CD8-positive, alpha-beta memory T cell (primary cell): ENCODE measurements at regions of chr11 and their contacts with region 1.

Region 1: DNA sequence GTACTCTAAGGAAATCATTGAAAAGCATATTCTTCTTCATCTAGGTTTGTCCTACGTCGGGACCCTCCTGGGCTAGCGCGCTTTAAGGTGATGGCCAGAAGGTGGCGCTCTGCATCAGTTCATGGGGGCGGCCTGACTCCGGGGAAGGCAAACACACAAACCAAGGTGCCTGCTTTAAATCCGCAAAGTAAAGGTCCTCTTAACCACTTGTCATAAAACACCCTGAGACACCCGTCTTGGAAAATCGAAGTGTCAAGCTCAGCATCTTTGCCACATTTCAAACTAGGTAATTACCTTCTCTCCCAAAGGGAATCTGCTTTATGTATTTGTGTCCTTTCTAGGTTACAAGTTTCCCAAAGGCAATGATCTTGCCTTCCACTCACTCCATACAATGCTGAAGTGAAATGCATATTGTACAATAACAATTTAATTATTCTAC is 33.9 kb downstream of the LMO2 start:
- DNase-seq: peak; percentile 43 to 72 (median 45)
- H3K4me3 ChIP-seq: no peak overlapping the region
- H3K4me3 Mint-ChIP-seq: no peak overlapping the region
- H3K27ac ChIP-seq: no peak overlapping the region
- H3K27ac Mint-ChIP-seq: peak overlapping the region in 1 of 8 donors; percentile 45
- H3K4me1 ChIP-seq: no peaks in the 10 kb centered on the region
- H3K4me1 Mint-ChIP-seq: no peaks in the 10 kb centered on the region
- H3K27me3 ChIP-seq: peaks cover 4% of the 10 kb centered on the region
- H3K27me3 Mint-ChIP-seq: peaks cover 20 to 68% of the 10 kb centered on the region in 2 donors

Region 2: DNA sequence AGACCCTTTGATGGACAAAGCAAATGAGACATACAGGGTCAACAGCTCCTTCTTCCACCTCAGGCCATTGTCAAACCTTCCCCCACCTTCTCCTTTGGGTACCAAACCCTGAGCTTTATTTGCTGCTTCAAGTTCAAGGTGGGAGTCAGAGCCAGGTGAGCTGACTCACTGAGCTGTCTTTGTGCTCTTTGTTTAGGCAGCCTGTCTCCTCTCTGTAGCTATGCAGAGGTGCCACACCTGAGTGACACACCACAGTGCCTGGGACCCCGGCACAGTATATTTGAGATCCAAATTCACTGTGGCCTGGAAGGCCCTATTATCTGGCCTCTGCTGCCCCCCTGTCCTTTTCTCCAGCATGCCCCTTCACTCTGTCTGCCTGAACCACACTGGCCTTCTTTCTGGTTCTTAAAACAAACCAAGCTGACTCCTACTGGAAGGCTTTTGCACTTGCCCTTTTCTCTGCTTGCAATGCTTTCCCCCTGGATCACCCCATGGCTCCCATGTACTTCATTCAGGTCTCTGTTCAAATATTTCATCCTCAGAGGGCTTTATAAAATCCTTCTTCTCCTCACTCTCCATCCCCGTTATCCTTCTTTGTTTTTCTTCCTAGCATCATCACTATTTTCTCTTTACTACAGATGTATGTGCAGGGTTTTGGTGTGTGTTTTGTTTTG is 17.8 kb after region 1 on chr11:
- CTCF ChIA-PET with region 1: no interaction called
- POLR2A ChIA-PET with region 1: no interaction called
- DNase-seq: no peak
- H3K4me3 ChIP-seq: no peak overlapping the region
- H3K4me3 Mint-ChIP-seq: no peak overlapping the region
- H3K27ac ChIP-seq: no peak overlapping the region
- H3K27ac Mint-ChIP-seq: peak overlapping the region in 1 of 8 donors; percentile 45
- H3K4me1 ChIP-seq: no peaks in the 10 kb centered on the region
- H3K4me1 Mint-ChIP-seq: peaks cover 0 to 3% (median 2%) of the 10 kb centered on the region in 3 donors
- H3K27me3 ChIP-seq: peaks cover 4% of the 10 kb centered on the region
- H3K27me3 Mint-ChIP-seq: peaks cover 41 to 78% of the 10 kb centered on the region in 2 donors

Region 3: DNA sequence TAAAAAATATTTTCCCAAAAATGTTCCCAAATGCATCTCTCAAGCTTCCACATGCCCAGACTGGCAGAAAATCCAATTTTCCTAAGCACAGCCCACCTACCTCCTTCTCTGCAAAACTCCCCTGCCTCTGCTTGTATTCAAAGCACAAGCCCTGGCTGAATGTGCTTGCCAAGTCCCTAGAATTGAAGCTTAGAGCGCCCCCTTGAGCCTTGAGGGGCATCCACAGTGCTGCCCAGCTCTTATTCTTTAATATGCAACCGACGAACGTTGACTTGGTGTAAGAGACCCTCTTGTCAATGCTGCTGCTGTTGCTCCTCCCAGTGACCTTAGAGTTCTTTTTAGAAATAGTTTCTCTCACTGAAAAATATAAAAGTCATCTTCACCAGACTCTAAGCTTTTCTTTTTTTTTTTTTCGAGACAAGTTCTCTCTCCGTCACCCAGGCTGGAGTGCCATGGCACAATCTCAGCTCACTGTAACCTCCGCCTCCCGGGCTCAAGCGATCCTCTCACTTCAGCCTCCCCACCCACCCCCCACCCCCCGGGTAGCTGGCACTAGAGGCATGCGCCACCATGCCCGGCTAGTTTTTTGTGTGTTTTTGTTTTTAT is 130.1 kb after region 1 on chr11:
- CTCF ChIA-PET with region 1: interaction called, 10 read pairs
- POLR2A ChIA-PET with region 1: no interaction called
- DNase-seq: peak; percentile 58 to 81 (median 64)
- H3K4me3 ChIP-seq: no peak overlapping the region
- H3K4me3 Mint-ChIP-seq: no peak overlapping the region
- H3K27ac ChIP-seq: no peak overlapping the region
- H3K27ac Mint-ChIP-seq: no peak overlapping the region
- H3K4me1 ChIP-seq: no peaks in the 10 kb centered on the region
- H3K4me1 Mint-ChIP-seq: peaks cover 4 to 11% (median 11%) of the 10 kb centered on the region in 3 donors
- H3K27me3 ChIP-seq: no peaks in the 10 kb centered on the region
- H3K27me3 Mint-ChIP-seq: peaks cover 8 to 12% of the 10 kb centered on the region in 2 donors